Dendritic cell treated with granulocyte-macrophage colony-stimulating factor and Interleukin-4, amounts not matched to agents 40 ng/mL and 50 ng/mL, for 4 days (primary cell): ENCODE measurements at regions of chr14 and their contacts with region 1.

Region 1: GRCh38 chr14:93105362-93105761 is 10.4 kb downstream of the ITPK1 start:
- H3K4me3 Mint-ChIP-seq: peak overlapping the region; percentile 42
- H3K27ac Mint-ChIP-seq: peak overlapping the region; percentile 67
- H3K4me1 Mint-ChIP-seq: peaks cover 97% of the 10 kb centered on the region
- H3K27me3 Mint-ChIP-seq: no peaks in the 10 kb centered on the region

Region 2: DNA sequence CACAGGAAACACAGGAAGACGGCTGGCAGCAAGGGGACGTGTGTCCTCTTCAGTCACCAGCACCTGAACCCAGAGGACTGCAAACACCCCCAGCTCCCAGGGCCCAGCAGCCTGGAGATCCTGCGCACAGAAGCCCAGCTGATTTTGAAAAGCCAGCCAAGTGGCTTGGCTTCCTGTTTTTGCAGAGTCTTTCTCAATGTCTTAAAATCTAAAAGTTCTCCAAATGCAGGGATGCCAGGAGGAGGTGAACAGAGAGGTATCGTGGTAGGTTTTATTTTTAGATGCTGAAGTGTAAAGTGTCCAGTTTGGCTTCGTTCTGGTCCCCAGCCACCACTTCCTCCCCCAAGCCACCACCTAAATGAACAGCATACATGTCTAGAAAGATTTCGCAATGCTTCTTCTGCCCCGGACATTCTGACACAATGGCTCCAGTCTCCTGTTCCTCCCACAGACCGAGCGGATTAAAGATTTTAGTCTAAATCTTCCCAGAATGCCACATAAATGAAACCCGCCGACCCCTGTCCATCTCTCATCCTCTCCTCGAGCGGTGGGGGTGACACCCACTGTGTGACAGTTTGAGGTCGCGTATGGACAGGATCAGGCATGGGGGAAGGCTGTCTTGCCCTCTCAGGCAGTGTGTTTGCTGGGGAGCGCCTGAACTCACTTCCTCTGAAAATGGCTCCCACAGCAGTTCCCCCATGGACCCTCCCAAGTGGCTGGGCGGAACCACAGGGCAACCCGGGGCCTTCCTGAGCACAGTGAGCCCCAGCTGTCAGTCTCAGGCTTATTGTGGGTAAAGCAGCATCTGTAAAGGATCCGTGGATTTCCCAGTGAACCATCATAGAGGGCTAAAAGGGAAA is 31.2 kb before region 1 on chr14:
- intact Hi-C with region 1: loop called (anchors 5 kb)
- H3K4me3 Mint-ChIP-seq: peak overlapping the region; percentile 76
- H3K27ac Mint-ChIP-seq: peak overlapping the region; percentile 92
- H3K4me1 Mint-ChIP-seq: peaks cover 89% of the 10 kb centered on the region
- H3K27me3 Mint-ChIP-seq: no peaks in the 10 kb centered on the region

Region 3: GRCh38 chr14:93137864-93138263 is 32.5 kb after region 1 on chr14:
- intact Hi-C with region 1: no loop called
- H3K4me3 Mint-ChIP-seq: no peak overlapping the region
- H3K27ac Mint-ChIP-seq: no peak overlapping the region
- H3K4me1 Mint-ChIP-seq: peaks cover 42% of the 10 kb centered on the region
- H3K27me3 Mint-ChIP-seq: no peaks in the 10 kb centered on the region

Region 4: GRCh38 chr14:93543766-93544165 is 438.4 kb after region 1 on chr14:
- intact Hi-C with region 1: no loop called
- H3K4me3 Mint-ChIP-seq: no peak overlapping the region
- H3K27ac Mint-ChIP-seq: no peak overlapping the region
- H3K4me1 Mint-ChIP-seq: peaks cover 15% of the 10 kb centered on the region
- H3K27me3 Mint-ChIP-seq: peaks cover 4% of the 10 kb centered on the region